Activated CD4-positive, alpha-beta T cell treated with anti-CD3 and anti-CD28 coated beads for 36 hours (primary cell): ENCODE measurements at regions of chr9 and their contacts with region 1.

Region 1: GRCh38 chr9:4832786-4833579 is 40.2 kb downstream of the RCL1 start:
- DNase-seq: peak; percentile 81
- ATAC-seq: peak; percentile 94
- H3K4me3 Mint-ChIP-seq: peak overlapping the region; percentile 16
- H3K27ac Mint-ChIP-seq: peak overlapping the region; percentile 84
- H3K4me1 Mint-ChIP-seq: peaks cover 45% of the 10 kb centered on the region
- H3K27me3 Mint-ChIP-seq: no peaks in the 10 kb centered on the region

Region 2: DNA sequence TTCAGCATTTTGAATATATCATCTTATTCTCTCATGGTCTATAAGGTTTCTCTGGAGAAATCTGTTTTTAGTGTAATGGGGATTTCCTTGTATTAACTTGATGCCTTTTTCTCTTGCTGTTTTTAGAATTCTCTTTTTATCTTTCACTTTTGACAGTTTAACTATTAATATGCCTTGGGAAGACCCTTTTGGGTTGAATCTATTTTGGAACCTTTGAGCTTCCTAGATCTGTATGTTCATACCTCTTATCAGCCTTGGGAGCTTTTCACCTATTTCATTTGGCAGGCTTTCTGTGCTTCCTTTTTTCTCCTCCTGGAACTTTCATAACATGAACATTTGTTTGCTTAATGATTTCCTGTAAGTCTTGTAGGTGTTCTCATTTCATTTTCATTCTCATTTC is 18.1 kb before region 1 on chr9:
- CTCF ChIA-PET with region 1: interaction called, 6 read pairs
- POLR2A ChIA-PET with region 1: interaction called, 4 read pairs
- intact Hi-C with region 1: loop called in 1 of 2 experiments (anchors 2 kb)
- DNase-seq: no peak
- ATAC-seq: peak; percentile 39
- H3K4me3 Mint-ChIP-seq: no peak overlapping the region
- H3K27ac Mint-ChIP-seq: peak overlapping the region; percentile 76
- H3K4me1 Mint-ChIP-seq: peaks cover 32% of the 10 kb centered on the region
- H3K27me3 Mint-ChIP-seq: no peaks in the 10 kb centered on the region

Region 3: DNA sequence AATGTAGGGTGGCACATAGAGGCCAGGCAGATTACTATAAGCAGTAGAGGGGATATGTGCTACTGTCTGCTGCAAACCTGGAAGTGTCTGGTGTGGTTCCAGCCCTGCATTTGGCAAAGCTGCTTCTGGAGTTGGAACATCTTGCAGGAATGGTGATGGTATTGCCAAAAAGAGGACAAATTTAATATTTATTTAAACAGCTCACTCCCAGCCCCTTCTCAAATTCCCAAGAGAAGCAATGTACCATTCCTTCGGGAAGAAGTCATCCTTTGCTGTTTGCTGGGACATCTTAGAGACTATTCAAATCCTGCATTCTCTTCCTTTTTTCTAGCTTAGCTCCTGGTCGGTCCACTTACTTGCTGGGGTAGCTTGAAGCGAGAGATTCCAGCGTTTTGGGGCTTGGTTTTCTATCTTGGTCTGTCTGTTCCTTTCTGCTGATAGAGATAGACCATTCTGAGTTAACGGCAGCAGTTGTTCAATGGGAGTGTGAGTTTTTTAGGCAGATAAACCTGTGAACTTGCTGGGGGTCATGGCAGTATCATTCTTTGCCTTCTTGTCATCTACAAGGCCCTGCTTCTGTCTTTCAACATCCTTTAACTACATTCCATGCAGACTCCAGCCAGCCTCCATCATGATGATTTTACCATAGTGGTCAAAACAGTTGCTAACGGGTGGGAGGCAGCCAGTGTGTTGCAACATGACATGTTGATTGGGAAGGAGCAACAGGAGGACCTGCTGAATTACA is 29.7 kb after region 1 on chr9:
- CTCF ChIA-PET with region 1: no interaction called
- POLR2A ChIA-PET with region 1: no interaction called
- intact Hi-C with region 1: loop called in 1 of 2 experiments (anchors 5 kb)
- DNase-seq: no peak
- ATAC-seq: no peak
- H3K4me3 Mint-ChIP-seq: no peak overlapping the region
- H3K27ac Mint-ChIP-seq: no peak overlapping the region
- H3K4me1 Mint-ChIP-seq: peaks cover 20% of the 10 kb centered on the region
- H3K27me3 Mint-ChIP-seq: no peaks in the 10 kb centered on the region

Region 4: GRCh38 chr9:5492965-5493678 is 660.1 kb after region 1 on chr9:
- CTCF ChIA-PET with region 1: no interaction called
- POLR2A ChIA-PET with region 1: no interaction called
- intact Hi-C with region 1: no loop called
- DNase-seq: no peak
- ATAC-seq: no peak
- H3K4me3 Mint-ChIP-seq: no peak overlapping the region
- H3K27ac Mint-ChIP-seq: peak overlapping the region; percentile 22
- H3K4me1 Mint-ChIP-seq: peaks cover 19% of the 10 kb centered on the region
- H3K27me3 Mint-ChIP-seq: no peaks in the 10 kb centered on the region